ENCODE measurements at regions of chr3 and their contacts with region 1.

Region 1: GRCh38 chr3:23945903-23946751 is 1.0 kb downstream of the NR1D2 start:
- DNase-seq: peak; percentile 98
- H3K4me3 ChIP-seq: peak overlapping the region; percentile 29 to 92 (median 63)
- H3K27ac ChIP-seq: peak overlapping the region; percentile 90
- H3K4me1 ChIP-seq: peaks cover 17% of the 10 kb centered on the region
- H3K27me3 ChIP-seq: peaks cover 3 to 10% of the 10 kb centered on the region in 2 experiments
- CTCF ChIP-seq: no peak
- POLR2A ChIP-seq: no peak

Region 2: DNA sequence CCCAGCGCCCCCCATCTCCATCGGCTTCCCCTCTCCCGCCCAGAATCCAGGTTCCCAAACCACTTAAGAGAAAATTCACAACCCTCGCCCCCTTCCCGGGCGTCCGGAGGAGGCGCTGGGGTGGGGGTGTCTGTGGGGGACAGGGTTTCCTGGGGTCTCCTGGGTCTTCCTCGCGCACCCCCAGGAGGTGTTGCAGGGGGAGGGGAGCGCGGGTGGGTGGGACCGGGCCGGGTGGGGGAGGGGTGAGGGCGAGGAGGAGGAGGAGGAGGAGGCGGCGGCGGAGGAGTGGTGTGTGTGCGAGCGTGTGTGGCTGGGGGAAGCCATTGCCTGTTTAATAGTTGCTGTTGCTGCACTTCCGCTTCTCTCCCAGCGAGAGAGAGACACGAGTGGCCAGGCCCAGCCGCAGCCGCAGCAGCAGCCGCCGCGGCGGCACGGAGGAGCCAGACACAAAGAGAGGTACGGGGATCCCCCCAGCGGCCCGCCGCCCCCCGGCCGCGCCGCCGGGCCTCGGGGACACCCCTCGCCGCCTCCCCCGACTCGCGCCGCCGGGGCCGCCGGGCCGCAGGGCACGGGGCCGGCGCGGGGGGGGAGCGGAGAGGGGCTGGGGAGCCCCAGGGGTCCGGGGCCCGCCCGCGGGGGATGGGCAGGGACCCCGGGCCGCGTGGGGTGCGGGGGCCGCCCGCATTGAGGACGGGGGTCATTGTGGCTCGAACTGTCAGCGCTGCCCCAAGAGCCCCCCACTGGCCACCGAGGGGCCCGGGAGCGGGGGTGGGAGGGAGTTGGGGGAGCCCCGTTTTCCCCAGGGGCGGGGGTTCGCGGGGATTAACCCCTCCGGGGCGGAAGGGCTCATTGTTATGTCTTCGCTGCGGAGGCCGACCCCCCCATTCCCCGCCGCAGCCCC is 140.2 kb before region 1 on chr3 and contains the start of gene UBE2E1:
- CTCF ChIA-PET with region 1: no interaction called
- POLR2A ChIA-PET with region 1: no interaction called
- dilution Hi-C with region 1: no loop called
- intact Hi-C with region 1: loop called (anchors 2 kb)
- DNase-seq: peak; percentile 55
- H3K4me3 ChIP-seq: peak within 1 kb of the TSS; percentile 81 to 95 (median 94)
- H3K27ac ChIP-seq: peak within 1 kb of the TSS; percentile 42
- H3K4me1 ChIP-seq: peaks cover 25% of the 10 kb centered on the region
- H3K27me3 ChIP-seq: no peaks in the 10 kb centered on the region
- CTCF ChIP-seq: peak in 1 of 2 donors; percentile 4
- POLR2A ChIP-seq: peak; percentile 56
- total RNA-seq, gene UBE2E1: 114 TPM in 2 replicates

Region 3: DNA sequence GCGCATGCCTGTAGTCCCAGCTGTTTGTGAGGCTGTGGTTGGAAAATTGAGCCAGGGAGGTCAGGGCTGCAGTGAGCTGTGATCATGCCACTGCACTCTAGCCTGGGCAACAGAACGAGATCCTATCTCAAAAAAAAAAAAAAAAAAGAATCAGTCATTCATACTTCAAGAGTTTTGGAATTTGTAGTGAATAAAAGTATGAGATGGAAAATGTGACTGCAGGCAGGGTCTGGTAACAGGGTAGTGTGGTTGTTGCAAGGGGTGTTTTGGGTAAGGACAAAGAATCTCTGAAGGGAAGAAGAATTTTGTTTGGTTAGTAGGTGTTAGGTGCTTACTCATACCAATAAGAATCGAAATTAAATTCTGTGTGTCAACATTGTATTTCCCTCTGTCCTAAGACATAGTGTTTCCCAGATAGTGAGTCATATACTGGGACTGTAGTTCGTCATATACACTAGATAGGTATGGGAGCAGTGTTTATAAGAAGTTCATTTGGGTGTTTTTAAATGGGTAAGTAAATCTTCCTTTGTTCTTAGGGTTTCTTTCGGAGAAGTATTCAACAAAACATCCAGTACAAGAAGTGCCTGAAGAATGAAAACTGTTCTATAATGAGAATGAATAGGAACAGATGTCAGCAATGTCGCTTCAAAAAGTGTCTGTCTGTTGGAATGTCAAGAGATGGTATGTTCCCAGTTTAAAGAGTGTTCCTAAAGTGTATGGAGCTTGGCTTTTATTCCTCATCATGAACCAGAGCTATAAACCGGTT is 13.2 kb after region 1 on chr3:
- CTCF ChIA-PET with region 1: interaction called, 6 read pairs
- POLR2A ChIA-PET with region 1: interaction called, 7 read pairs
- dilution Hi-C with region 1: no loop called
- intact Hi-C with region 1: loop called (anchors 1 kb)
- DNase-seq: peak; percentile 87
- H3K4me3 ChIP-seq: no peak overlapping the region
- H3K27ac ChIP-seq: peak overlapping the region; percentile 81
- H3K4me1 ChIP-seq: peaks cover 21% of the 10 kb centered on the region
- H3K27me3 ChIP-seq: no peaks in the 10 kb centered on the region
- CTCF ChIP-seq: no peak
- POLR2A ChIP-seq: no peak

Region 4: GRCh38 chr3:24072193-24072592 is 126.1 kb after region 1 on chr3:
- CTCF ChIA-PET with region 1: no interaction called
- POLR2A ChIA-PET with region 1: no interaction called
- dilution Hi-C with region 1: no loop called
- intact Hi-C with region 1: no loop called
- DNase-seq: no peak
- H3K4me3 ChIP-seq: no peak overlapping the region
- H3K27ac ChIP-seq: no peak overlapping the region
- H3K4me1 ChIP-seq: no peaks in the 10 kb centered on the region
- H3K27me3 ChIP-seq: no peaks in the 10 kb centered on the region
- CTCF ChIP-seq: no peak
- POLR2A ChIP-seq: no peak

Region 5: DNA sequence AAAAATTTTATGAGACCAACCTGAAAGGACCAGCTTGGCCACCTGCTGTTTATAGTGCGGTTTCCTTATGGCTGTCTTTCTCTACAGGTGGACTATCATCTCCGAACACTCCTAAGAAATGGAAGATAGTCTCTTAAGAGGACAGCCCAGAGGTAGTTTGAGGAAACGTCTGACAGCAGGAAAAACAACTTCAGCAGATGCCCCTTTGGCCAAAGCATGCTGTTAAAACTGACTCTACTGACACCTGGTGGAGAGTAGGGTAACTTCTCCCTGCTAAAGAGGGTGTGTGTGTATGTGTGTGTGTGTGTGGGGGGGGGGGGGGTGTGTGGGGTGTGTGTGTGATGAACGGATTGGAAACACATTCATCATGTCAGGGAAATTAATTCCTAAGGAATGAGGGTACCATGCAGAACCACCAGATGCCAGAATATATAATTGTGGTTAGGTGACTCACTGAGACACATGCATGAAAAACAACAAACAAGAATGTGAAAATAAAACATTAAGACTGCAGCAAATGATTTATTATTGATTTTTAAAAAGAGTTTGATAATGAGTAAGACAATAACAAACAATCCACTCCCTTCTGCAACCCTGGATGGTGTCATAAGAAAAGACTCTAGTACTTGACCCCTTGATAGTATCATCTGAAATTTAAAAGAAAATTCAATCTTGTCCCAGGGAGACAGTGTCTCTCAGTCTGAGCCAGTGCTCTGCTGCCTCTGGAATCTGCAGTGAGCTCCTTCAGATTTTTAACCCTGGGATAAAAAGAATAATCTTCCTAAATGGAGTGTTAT is 292.0 kb after region 1 on chr3:
- CTCF ChIA-PET with region 1: no interaction called
- POLR2A ChIA-PET with region 1: no interaction called
- dilution Hi-C with region 1: no loop called
- intact Hi-C with region 1: loop called (anchors 2 kb)
- DNase-seq: peak; percentile 78
- H3K4me3 ChIP-seq: no peak overlapping the region
- H3K27ac ChIP-seq: no peak overlapping the region
- H3K4me1 ChIP-seq: peaks cover 23% of the 10 kb centered on the region
- H3K27me3 ChIP-seq: no peaks in the 10 kb centered on the region
- CTCF ChIP-seq: peak; percentile 55 to 75
- POLR2A ChIP-seq: no peak